K562 (cell line): ENCODE measurements at regions of chr12 and their contacts with region 1.

Region 1: DNA sequence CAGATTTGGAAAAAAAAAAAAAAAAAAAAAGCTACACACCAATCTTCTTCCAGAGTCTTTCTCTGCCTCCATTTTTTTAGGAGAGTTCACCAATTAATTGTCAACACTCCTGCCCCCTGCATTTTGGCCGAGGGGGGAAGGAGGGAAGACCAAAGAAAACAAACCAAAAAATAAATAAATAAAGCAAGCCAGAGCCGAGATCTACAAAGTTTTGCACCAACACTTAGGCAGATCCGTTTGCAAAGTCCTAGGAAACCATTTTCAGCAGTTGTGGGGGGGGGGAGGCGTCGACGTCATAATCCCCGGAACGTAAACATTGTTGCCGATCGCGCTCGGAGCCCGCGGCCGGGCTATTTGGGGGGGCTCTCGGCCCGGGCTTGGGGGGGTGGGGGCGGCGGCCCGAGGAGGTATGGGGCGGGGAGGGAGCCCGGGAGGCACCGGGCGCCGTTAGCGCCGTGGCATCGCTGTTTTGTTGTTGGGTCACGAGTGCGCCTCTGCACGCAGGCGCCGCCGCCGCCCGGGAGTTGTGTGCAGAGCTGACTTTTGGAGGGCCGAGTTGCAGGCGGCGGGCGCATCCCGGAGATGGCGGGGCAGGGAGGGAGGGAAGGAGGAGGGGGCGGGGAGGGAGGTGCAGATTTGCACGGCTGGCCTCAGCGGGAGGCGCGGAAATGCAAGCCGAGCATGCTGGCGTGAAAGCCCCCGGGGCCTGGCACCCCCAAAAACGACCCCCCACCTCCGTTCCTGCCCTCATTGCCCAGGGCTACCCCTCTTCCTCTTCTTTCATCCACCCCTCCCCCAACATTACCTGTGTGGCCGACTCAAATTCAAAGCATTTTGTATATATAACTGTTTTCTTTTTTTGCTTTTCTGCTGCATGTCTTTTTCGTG is 598 bp downstream of the KDM2B start:
- DNase-seq: peak; percentile 78 to 84 (median 84)
- ATAC-seq: peak; percentile 79
- H3K4me3 ChIP-seq: peak overlapping the region; percentile 54
- H3K27ac ChIP-seq: peak overlapping the region; percentile 88
- H3K4me1 ChIP-seq: peaks cover 42 to 47% of the 10 kb centered on the region in 2 experiments
- H3K27me3 ChIP-seq: no peaks in the 10 kb centered on the region
- CTCF ChIP-seq: no peak
- EP300 ChIP-seq: no peak
- POLR2A ChIP-seq: peak; percentile 29; the same call in 1 of the 2 replicates
- RAD21 ChIP-seq: no peak

Region 2: DNA sequence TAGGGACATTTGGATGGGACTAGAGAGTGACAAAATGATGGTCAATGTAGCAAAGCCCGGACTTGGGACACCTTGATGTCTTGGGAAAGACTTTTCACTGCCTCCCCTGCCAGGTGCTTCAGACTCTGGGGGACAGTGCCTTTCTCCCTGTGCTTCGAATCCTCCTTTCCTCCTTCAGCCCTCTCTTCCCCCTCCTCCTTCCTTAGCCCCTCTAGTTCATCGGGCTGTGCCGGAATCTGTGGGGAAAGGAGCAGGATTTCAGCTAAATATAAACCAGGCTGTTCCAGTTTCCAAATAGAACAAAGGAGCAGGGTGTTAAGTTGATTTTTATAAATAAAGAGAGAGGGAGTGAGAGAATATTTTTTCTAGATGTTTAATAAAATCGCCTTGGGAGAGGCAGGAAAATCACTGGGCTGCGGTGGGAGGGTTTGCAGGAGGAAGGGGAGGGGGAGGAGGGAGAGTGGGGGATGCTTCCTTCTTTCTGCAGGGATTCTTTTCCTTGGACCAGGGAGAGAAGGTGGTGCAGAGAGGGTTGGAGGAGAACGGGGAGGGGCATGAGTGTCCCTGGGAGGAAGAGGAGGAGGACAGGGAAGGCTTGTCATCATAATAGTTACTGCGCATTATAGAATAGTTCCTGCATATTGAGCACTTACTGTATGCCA is 961.1 kb before region 1 on chr12:
- CTCF ChIA-PET with region 1: no interaction called
- POLR2A ChIA-PET with region 1: no interaction called
- in situ Hi-C with region 1: no loop called
- intact Hi-C with region 1: no loop called
- DNase-seq: no peak
- ATAC-seq: no peak
- H3K4me3 ChIP-seq: no peak overlapping the region
- H3K27ac ChIP-seq: no peak overlapping the region
- H3K4me1 ChIP-seq: no peaks in the 10 kb centered on the region
- H3K27me3 ChIP-seq: peaks cover 10 to 29% of the 10 kb centered on the region in 2 experiments; a peak in 4 of 5 replicates
- CTCF ChIP-seq: no peak
- EP300 ChIP-seq: no peak
- POLR2A ChIP-seq: no peak
- RAD21 ChIP-seq: no peak

Region 3: GRCh38 chr12:121568971-121569751 is 11.1 kb before region 1 on chr12:
- CTCF ChIA-PET with region 1: no interaction called
- POLR2A ChIA-PET with region 1: interaction called, 11 read pairs
- in situ Hi-C with region 1: no loop called
- intact Hi-C with region 1: no loop called
- DNase-seq: no peak
- ATAC-seq: peak; percentile 65
- H3K4me3 ChIP-seq: no peak overlapping the region
- H3K27ac ChIP-seq: no peak overlapping the region
- H3K4me1 ChIP-seq: peaks cover 0 to 5% of the 10 kb centered on the region in 2 experiments; a peak in 2 of 5 replicates
- H3K27me3 ChIP-seq: no peaks in the 10 kb centered on the region
- CTCF ChIP-seq: no peak
- EP300 ChIP-seq: no peak
- POLR2A ChIP-seq: no peak
- RAD21 ChIP-seq: no peak